Activated CD4-positive, alpha-beta memory T cell treated with anti-CD3 and anti-CD28 coated beads for 36 hours (primary cell): ENCODE measurements at regions of chr20 and their contacts with region 1.

Region 1: DNA sequence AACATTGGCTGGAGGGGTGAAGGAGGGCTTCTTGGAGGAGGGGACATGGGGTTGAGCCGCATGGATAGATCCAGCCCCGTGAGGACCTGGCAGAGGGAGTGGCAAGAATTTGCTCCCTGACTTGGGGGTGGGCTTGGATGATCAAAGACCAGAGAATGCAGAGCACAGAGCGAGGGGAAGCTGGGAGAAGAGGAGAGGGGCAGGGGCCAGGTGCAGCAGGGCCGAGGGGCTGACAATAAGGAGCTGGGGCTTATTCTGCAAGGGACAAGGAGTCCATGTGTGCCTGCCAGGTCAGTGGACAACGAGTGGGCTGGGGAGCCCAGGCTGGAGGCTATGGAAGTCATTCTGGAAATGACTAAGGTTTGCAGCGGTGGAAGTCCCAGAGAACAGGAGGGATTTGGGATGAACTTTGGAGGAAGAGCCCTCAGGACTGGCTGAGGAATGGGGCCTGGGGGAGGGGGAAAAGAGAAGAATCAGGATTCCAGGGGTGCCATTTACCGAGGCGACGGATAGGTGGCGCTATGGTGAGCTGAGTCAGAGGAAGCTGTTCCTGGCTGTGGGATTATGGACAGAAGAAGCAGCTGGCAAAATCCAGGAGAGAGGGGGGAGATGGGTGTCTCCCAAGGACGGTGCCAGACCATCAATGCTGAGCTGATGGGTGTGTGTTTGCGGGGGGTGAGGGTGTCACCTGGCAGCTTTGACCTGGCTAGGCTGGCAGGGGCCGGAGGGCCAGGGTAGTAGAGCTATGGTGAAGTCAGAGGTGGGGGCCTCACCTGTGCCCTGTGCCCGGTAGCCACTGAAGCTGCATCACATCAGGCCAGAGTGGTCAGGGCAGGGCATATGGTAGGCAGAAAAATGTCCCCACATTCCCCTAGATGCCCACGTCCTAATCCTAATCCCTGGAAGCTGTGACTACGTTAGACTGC is 7.8 kb downstream of the KCNG1 start:
- DNase-seq: peak; percentile 49
- H3K4me3 Mint-ChIP-seq: no peak overlapping the region
- H3K27ac Mint-ChIP-seq: no peak overlapping the region
- H3K4me1 Mint-ChIP-seq: no peaks in the 10 kb centered on the region
- H3K27me3 Mint-ChIP-seq: peaks cover 24% of the 10 kb centered on the region

Region 2: GRCh38 chr20:51029963-51030920 is 15.2 kb after region 1 on chr20:
- CTCF ChIA-PET with region 1: interaction called, 14 read pairs
- POLR2A ChIA-PET with region 1: no interaction called
- intact Hi-C with region 1: no loop called
- DNase-seq: no peak
- H3K4me3 Mint-ChIP-seq: no peak overlapping the region
- H3K27ac Mint-ChIP-seq: no peak overlapping the region
- H3K4me1 Mint-ChIP-seq: no peaks in the 10 kb centered on the region
- H3K27me3 Mint-ChIP-seq: peaks cover 68% of the 10 kb centered on the region